Aorta (tissue), 5 donors: ENCODE measurements at regions of chr3 and their contacts with region 1.

Region 1: GRCh38 chr3:9503283-9503682 is 50.3 kb downstream of the LHFPL4 start:
- DNase-seq: peak in 1 of 2 donors; percentile 83
- ATAC-seq: no peak
- H3K4me3 ChIP-seq: no peak overlapping the region
- H3K27ac ChIP-seq: no peak overlapping the region
- H3K4me1 ChIP-seq: no peaks in the 10 kb centered on the region
- H3K27me3 ChIP-seq: no peaks in the 10 kb centered on the region

Region 2: GRCh38 chr3:9649791-9650521 is 146.7 kb after region 1 on chr3:
- intact Hi-C with region 1: loop called in 1 of 2 experiments (anchors 10 kb)
- DNase-seq: no peak
- ATAC-seq: peak; percentile 3
- H3K4me3 ChIP-seq: peak overlapping the region; percentile 73 to 94
- H3K27ac ChIP-seq: peak overlapping the region in 1 of 2 donors; percentile 7
- H3K4me1 ChIP-seq: peaks cover 0 to 2% of the 10 kb centered on the region in 2 donors
- H3K27me3 ChIP-seq: no peaks in the 10 kb centered on the region

Region 3: DNA sequence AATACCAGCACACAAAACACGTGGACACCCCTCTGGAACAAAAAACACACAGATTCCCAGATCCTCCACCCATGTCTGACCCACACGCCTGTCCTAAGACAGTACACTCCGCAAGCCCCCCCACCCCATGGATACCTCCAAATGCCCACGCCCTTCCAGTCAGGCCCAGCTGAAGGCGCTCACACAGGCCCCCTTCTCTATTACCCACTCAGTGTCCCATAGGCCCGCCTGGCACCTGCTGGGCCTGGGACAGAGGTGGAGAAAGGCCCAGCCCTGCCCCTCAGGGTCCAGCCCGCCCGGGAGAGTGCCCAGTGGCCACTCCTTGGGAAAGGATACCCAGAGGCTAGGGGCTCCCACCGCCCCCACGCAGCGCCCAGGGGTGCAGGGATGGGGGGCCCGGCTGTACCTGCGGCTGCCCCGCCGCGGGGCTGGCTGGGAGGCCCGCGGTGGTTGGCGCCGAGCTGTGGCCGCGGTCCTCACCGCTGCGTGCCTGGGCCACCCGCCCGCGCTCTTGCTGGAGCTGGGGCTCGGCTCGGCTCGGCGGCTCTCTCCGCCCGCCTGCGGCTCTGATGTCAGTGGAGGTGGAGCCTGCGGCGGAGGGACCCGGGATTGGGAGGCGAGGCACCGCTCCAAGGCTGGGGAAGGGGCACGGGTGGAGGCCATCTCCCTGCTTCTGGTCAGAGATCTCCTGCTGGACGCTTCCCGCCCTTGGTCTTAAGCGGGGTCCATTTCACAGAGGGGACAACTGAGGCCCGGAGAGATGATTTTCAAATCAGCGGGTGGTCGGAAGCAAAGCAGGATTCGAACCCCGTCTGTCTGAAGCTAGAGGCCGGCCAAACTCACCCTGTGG is 266.4 kb after region 1 on chr3 and contains the start of gene CAMK1:
- intact Hi-C with region 1: no loop called
- DNase-seq: peak; percentile 91 to 96
- ATAC-seq: peak; percentile 95
- H3K4me3 ChIP-seq: peak within 1 kb of the TSS; percentile 42 to 84
- H3K27ac ChIP-seq: peak within 1 kb of the TSS; percentile 58 to 70
- H3K4me1 ChIP-seq: peaks cover 2 to 4% of the 10 kb centered on the region in 2 donors
- H3K27me3 ChIP-seq: no peaks in the 10 kb centered on the region
- total RNA-seq, gene CAMK1: 31.4 to 40.2 TPM